Dendritic cell treated with granulocyte-macrophage colony-stimulating factor and Interleukin-4, amounts not matched to agents 40 ng/mL and 50 ng/mL, for 4 days (primary cell): ENCODE measurements at regions of chr9 and their contacts with region 1.

Region 1: GRCh38 chr9:19481971-19482404 is 73.2 kb downstream of the ACER2 start:
- H3K4me3 Mint-ChIP-seq: no peak overlapping the region
- H3K27ac Mint-ChIP-seq: no peak overlapping the region
- H3K4me1 Mint-ChIP-seq: no peaks in the 10 kb centered on the region
- H3K27me3 Mint-ChIP-seq: peaks cover 2% of the 10 kb centered on the region

Region 2: DNA sequence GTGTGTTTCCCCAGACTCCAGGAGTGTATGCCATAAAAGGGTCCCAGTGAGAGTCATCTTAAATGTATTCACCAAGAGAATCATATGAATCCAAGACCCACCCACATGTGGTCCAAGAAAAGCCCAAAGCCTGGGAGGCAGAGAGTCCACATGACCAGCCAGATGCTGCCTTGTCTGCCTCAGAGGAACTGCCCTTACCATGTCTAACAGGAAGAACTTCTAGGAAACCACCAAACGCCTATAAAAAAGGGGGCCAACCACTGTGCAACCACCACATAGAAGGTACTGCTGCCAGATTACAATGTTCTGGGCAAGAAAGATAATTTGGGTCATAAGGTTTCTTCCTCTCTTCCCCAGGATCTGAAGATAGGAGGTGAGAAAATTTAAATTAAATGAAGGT is 436.6 kb after region 1 on chr9:
- intact Hi-C with region 1: loop called (anchors 10 kb)
- H3K4me3 Mint-ChIP-seq: no peak overlapping the region
- H3K27ac Mint-ChIP-seq: no peak overlapping the region
- H3K4me1 Mint-ChIP-seq: no peaks in the 10 kb centered on the region
- H3K27me3 Mint-ChIP-seq: peaks cover 3% of the 10 kb centered on the region